Activated CD4-positive, alpha-beta T cell treated with anti-CD3 and anti-CD28 coated beads, Interleukin-2, amount 10 ng/mL, durations not matched to agents 24 days and 14 days (primary cell): ENCODE measurements at regions of chr19 and their contacts with region 1.

Region 1: DNA sequence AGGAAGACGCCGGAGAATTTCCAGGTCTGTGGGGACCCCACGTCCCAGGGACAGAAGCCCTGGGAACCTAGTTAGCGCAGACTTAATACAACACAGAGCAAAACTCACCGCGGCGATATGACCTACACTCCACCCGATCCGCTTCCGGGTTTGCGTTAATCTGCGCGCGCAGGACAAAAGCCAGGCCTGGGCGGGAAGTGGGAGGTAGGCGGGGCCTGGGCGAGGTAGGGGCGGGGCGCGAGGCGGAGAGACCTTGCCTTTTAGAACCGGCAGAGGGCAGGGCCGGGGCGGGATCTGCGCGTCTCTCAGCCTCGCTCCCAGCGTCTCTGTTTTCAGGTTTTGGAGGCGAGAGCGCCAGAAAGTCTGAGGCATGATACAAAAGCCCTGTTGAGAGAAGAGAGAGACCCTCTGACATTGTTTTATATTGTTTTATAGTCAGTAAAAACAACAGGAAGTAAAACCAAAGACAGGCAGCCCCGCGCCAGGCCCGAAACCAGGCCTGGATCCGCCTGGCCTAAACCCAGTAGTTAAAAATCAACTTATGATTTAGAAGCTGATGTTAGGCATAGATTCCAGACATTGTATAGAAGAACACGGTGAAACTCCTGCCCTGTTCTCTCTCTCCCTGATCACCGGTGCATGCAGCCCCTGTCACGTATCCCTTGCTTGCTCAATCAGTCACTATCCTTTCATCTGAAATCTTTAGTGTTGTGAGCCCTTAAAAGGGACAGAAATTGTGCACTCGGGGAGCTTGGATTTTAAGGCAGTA is at the start of gene ZNF611:
- DNase-seq: peak; percentile 100
- H3K4me3 Mint-ChIP-seq: peak within 1 kb of the TSS; percentile 92
- H3K27ac Mint-ChIP-seq: peak within 1 kb of the TSS; percentile 88
- H3K4me1 Mint-ChIP-seq: peaks cover 19% of the 10 kb centered on the region
- H3K27me3 Mint-ChIP-seq: no peaks in the 10 kb centered on the region
- total RNA-seq, gene ZNF611: 15.9 and 18.2 TPM in 2 replicates

Region 2: DNA sequence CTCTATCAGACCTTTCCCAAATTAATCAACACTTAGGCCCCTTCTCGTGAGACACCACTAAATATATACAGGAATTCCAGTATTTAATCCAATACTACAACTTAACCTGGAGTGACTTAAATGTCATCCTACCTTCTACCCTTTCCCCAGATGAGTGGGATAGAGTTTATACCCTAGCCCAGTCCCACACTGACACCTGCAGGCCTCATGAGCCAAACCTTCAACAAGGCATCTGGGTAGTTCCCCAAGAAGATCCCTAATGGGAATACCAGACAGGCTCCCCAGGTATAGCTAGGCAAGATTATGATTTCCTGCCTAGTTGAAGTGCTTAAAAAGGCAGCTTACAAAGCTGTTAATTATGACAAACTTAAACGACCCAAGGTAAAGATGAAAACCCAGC is 112.8 kb before region 1 on chr19:
- intact Hi-C with region 1: no loop called
- DNase-seq: no peak
- H3K4me3 Mint-ChIP-seq: no peak overlapping the region
- H3K27ac Mint-ChIP-seq: no peak overlapping the region
- H3K4me1 Mint-ChIP-seq: peaks cover 2% of the 10 kb centered on the region
- H3K27me3 Mint-ChIP-seq: no peaks in the 10 kb centered on the region

Region 3: DNA sequence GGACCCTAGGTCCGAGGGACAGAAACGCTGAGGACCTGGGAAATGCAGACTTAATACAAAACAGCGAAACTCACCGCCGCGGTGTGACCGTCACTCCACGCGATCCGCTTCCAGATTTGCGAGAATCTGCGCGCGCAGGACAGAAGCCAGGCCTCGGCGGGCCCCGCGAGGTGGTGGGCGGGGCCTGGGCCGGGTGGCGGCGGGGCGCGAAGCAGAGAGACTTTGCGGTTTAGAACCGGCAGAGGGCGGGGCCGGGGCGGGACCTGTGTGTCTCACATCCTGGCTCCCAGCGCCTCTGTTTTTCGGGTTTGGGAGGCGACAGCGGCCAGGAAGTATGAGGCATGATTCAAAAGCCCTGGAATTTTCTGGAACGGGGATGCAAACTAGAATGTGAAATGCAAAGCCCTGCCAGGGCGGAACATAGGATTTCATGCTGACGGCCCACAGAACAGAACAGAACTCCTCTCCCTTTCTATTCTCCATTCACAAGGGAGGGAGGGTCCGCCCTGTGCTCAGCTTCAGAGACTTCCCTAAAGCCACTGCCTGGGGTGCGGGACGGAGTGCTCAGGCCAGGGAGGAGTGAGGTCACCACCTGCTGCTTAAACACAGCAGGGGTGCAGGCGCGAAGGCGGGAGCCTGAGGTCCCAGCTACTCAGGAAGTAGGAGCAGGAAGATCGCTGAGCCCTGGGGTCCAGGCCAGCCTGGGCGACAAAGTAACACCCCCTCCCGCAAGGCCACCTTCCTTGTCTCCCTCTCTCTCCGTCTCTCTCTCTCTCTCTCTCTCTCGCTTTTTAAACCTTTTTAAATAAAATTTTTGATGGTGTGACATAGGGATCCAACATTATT is 44.5 kb before region 1 on chr19:
- intact Hi-C with region 1: loop called (anchors 1 kb)
- DNase-seq: peak; percentile 97
- H3K4me3 Mint-ChIP-seq: peak overlapping the region; percentile 94
- H3K27ac Mint-ChIP-seq: peak overlapping the region; percentile 91
- H3K4me1 Mint-ChIP-seq: peaks cover 22% of the 10 kb centered on the region
- H3K27me3 Mint-ChIP-seq: no peaks in the 10 kb centered on the region

Region 4: GRCh38 chr19:52710538-52710937 is 24.5 kb before region 1 on chr19:
- intact Hi-C with region 1: no loop called
- DNase-seq: no peak
- H3K4me3 Mint-ChIP-seq: no peak overlapping the region
- H3K27ac Mint-ChIP-seq: no peak overlapping the region
- H3K4me1 Mint-ChIP-seq: peaks cover 6% of the 10 kb centered on the region
- H3K27me3 Mint-ChIP-seq: no peaks in the 10 kb centered on the region

Region 5: DNA sequence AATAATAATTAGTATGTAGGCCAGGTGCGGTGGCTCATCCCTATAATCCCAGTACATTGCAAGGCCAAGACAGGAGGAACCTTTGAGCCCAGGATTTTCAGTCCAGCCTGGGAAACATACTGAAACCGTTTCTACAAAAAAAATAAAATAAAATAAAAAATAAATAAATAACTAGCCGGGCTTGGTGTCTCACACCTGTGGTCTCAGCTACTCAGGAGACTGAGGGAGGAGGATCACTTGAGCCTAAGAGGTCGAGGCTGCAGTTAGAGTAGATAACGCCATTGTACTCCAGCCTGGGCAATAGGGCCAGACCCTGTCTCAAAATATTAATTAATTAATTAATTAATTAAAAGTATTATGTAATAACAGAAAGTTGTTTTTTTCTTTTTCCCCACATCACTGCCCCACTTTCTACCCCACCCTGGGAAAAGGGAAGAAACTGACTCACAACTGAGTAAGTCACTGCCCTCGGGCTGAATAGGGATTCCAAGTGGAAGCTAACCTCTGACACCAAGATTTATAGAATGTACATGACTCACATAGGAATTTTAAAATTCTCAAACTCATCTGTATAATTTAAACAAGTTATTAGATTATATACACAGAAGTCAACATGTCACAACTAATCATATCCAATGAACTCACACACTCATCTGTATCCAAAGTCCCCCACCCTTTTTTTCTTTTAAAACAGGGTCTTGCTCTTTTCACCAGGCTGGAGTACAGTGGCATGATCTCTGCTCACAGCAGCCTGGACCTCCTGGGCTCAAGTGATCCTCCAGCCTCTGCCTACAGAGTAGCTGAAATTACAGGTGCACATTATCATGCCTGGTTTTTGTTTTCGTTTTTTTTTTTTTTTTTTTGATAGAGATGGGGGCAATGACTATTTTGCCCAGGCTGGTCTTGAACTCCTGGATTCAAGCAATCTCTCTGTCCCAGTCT is 12.7 kb before region 1 on chr19:
- intact Hi-C with region 1: no loop called
- DNase-seq: no peak
- H3K4me3 Mint-ChIP-seq: no peak overlapping the region
- H3K27ac Mint-ChIP-seq: no peak overlapping the region
- H3K4me1 Mint-ChIP-seq: no peaks in the 10 kb centered on the region
- H3K27me3 Mint-ChIP-seq: no peaks in the 10 kb centered on the region

Region 6: DNA sequence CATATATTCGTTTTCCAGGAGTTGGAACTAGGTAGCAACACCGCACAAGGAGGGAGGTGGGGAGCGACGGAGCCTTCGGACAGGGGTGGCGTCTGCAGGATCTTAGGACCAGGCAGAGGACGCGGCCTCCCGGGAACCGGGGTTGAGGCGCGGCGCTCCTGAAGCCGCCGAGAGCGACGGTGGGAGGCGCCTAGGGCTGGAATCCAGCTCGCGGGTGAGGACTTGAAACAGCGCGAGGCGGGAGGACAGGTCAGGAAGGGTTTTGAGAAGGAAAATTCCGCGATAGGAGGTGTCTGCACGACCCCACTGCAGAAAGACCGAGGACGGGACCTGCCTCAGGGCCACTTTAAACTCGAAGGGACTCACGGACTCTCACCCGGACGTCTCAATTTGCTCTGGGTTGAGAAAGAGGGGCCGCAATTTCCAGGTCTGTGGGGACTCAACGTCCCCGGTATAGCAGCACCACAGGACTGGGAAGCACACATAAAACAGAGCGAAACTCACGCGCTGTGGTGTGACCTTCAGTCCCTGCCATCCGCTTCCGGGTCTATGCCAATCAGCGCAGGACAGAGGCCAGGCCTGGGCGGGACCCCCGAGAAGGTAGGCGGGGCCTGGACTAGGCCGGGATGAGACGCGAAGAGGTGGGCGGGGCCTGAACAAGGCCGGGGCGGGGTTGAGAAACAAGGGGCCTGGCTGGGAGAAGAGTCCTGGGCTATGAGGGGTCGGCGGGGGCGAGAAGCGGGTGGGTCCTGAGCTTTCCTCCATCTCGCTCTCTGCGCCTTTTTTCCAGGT is 162.3 kb after region 1 on chr19 and contains the start of gene ZNF320:
- intact Hi-C with region 1: loop called (anchors 1 kb)
- DNase-seq: peak; percentile 98
- H3K4me3 Mint-ChIP-seq: peak within 1 kb of the TSS; percentile 92
- H3K27ac Mint-ChIP-seq: peak within 1 kb of the TSS; percentile 93
- H3K4me1 Mint-ChIP-seq: peaks cover 7% of the 10 kb centered on the region
- H3K27me3 Mint-ChIP-seq: no peaks in the 10 kb centered on the region
- total RNA-seq, gene ZNF320: 8.0 and 17.8 TPM in 2 replicates

Region 7: DNA sequence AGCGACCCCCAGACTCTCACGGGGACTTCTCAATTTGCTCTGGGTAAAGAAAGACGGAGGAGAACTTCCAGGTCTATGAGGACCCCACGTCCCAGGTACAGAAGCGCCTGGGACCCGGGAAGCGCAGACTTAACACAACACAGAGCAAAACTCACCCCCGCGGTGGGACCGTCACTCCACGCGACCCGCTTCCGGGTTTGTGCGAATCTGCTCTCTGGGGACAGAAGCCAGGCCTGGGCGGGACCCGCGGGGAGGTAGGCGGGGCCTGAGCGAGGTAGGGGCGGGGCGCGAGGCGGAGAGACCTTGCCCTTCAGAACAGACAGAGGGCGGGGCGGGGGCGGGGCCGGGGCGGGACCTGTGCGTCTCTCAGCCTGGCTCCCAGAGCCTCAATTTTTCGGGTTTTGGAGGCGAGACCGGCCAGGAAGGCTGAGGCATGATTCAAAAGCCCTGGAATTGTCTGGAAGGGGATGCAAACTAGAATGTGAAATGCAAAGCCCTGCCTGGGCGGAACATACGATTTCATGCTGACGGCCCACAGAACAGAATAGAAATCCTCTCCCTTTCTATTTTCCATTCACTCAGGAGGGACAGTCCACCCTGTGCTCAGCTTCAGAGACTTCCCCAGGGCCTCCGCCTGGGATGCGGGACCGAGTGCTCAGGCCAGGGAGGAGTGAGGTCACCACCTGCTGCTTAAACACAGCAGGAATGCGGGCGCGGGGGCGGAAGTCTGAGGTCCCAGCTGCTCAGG is 207.5 kb after region 1 on chr19:
- intact Hi-C with region 1: loop called (anchors 5 kb)
- DNase-seq: peak; percentile 99
- H3K4me3 Mint-ChIP-seq: peak overlapping the region; percentile 90
- H3K27ac Mint-ChIP-seq: peak overlapping the region; percentile 88
- H3K4me1 Mint-ChIP-seq: peaks cover 19% of the 10 kb centered on the region
- H3K27me3 Mint-ChIP-seq: no peaks in the 10 kb centered on the region

Region 8: GRCh38 chr19:53057904-53058580 is 323.0 kb after region 1 on chr19:
- intact Hi-C with region 1: no loop called
- DNase-seq: peak; percentile 58
- H3K4me3 Mint-ChIP-seq: peak overlapping the region; percentile 20
- H3K27ac Mint-ChIP-seq: no peak overlapping the region
- H3K4me1 Mint-ChIP-seq: no peaks in the 10 kb centered on the region
- H3K27me3 Mint-ChIP-seq: no peaks in the 10 kb centered on the region

Region 9: DNA sequence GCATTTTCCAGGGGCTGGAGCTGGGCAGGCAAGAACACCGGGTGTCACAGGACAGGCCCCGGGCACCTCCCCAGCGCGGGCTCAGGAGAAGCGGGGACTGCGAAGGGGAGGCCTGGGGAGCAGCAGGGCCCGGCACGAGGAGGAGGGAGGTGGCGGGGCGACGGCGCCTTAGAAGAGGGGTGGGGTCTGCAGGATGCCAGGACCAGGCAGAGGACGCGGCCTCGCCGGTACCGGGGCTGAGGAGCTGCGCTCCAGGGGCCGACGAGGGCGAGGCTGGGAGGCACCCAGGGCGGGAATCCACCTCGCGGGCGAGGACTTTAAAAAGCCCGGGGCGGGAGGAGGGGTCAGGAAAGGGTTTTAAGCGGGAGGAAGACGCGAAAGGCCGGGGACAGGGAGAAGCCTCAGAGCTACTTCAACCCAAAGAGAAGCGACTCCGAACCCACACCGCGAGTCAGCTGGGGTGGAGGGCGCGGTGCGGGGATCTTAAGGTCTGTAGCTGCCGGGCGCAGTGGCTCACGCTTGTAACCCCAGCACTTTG is 423.1 kb after region 1 on chr19:
- intact Hi-C with region 1: loop called (anchors 2 kb)
- DNase-seq: peak; percentile 75
- H3K4me3 Mint-ChIP-seq: peak overlapping the region; percentile 87
- H3K27ac Mint-ChIP-seq: peak overlapping the region; percentile 73
- H3K4me1 Mint-ChIP-seq: peaks cover 12% of the 10 kb centered on the region
- H3K27me3 Mint-ChIP-seq: no peaks in the 10 kb centered on the region